ENCODE measurements at regions of chr22 and their contacts with region 1.

Region 1: DNA sequence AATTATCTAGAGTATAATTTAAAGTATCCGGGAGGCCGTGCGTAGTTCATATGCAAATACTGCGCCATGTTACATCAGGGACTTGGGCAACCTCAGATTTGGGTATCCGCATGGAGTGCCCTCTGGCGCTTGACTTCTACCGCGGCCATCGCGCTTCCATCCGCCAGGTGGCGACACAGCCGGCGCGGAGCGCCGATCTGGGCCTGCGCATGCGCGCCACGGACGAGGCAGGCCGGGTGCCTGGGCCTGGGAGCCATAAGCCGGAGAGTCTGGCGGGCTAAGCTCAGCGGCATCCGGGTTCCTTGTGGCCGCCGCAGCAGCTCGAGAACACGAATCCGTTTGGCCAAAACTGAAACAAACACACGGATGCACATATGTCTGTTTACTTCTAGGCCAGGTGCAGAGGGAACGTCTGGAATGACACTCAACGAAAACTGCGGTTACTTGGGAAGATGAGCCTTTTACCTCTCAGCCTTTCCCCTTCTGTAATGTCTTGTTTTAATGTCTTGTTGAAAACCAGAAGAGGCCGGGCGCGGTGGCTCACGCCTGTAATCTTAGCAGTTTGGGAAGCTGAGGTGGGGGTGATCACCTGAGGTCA is 21.9 kb downstream of the SNU13 start:
- DNase-seq: peak; percentile 59
- H3K4me3 ChIP-seq: peak overlapping the region; percentile 37; the same call in 1 of the 2 replicates
- H3K27ac ChIP-seq: peak overlapping the region; percentile 95
- H3K27me3 ChIP-seq: no peaks in the 10 kb centered on the region
- CTCF ChIP-seq: peak; percentile 98

Region 2: DNA sequence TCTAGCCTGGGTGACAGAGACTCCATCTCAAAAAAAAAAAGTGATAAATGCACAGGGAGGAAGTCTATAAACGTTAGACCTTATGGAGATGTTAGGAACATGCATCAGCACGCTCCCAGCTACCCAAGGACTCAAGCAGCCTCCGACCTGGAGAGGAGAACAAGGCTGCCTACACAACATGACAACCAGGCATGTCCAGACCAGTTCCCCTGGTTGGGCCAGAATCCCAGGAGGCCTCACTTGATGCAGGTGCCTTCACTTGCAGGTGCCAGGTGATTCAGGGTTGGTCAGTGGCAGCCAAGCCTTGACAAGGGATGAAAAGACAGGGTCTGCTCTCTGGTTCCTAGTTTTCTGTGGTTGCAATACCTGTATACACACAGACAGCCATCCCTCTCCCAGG is 386.7 kb before region 1 on chr22:
- CTCF ChIA-PET with region 1: no interaction called
- POLR2A ChIA-PET with region 1: no interaction called
- DNase-seq: no peak
- H3K4me3 ChIP-seq: no peak overlapping the region
- H3K27ac ChIP-seq: peak overlapping the region; percentile 31
- H3K27me3 ChIP-seq: no peaks in the 10 kb centered on the region
- CTCF ChIP-seq: no peak

Region 3: DNA sequence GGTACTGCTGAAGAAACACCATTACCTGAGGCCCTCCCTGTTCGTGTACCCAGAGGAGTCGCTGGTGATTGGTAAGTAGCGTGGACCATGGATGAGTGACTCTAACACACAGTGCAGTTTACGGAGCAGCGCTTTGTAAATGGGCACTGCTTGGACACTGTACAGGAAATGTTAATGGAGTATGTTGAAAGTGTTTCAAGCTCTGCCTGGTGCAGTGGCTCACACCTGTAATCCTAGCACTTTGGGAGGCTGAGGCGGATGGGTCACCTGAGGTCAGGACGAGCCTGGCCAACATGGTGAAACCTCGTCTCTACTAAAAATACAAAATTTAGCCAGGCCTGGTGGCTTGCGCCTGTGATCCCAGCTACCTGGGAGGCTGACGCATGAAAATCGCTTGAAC is 15.9 kb before region 1 on chr22:
- CTCF ChIA-PET with region 1: interaction called, 11 read pairs
- POLR2A ChIA-PET with region 1: interaction called, 3 read pairs
- DNase-seq: no peak
- H3K4me3 ChIP-seq: no peak overlapping the region
- H3K27ac ChIP-seq: no peak overlapping the region
- H3K27me3 ChIP-seq: no peaks in the 10 kb centered on the region
- CTCF ChIP-seq: no peak

Region 4: DNA sequence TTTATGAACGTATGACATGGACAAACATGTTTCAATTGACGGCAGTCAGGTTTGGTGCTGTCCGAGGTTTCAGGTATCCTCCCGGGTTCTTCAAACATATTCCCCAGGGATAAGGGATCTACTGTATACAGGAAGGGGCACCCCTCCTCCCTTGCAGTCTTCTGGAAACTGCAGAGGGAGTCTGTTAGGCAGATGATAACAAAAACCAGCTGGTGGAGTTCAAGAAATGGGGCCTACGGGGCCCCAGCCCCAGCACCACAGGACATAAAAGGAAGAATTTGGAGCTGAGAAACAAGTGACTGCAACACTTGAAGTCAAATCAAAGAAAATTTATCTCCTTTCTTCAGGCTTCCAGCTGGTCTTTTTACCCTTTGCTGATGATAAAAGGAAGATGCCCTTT is 10.2 kb before region 1 on chr22:
- CTCF ChIA-PET with region 1: interaction called, 17 read pairs
- POLR2A ChIA-PET with region 1: interaction called, 3 read pairs
- DNase-seq: peak; percentile 3
- H3K4me3 ChIP-seq: no peak overlapping the region
- H3K27ac ChIP-seq: no peak overlapping the region
- H3K27me3 ChIP-seq: no peaks in the 10 kb centered on the region
- CTCF ChIP-seq: no peak

Region 5: DNA sequence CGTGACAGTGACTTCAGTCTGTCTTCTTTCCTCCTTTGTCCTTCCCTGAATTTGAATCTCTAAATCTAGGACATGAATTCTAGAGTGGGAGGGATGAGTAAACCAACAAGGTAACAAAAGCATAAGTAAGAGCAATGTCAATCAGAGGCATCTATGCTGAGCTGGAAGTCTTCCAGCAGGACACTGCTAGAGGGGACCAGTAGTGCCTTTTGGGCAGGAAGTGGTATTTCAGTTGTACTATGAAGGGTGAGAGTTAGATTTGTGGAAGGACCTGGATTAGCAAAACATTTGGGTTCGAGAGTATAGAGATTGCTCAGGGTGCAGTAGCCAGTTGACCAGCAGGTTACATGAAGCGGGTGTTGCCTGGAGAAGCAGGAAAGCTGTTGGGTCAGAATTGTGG is 72.8 kb after region 1 on chr22:
- CTCF ChIA-PET with region 1: no interaction called
- POLR2A ChIA-PET with region 1: no interaction called
- DNase-seq: no peak
- H3K4me3 ChIP-seq: no peak overlapping the region
- H3K27ac ChIP-seq: no peak overlapping the region
- H3K27me3 ChIP-seq: peaks cover 9% of the 10 kb centered on the region
- CTCF ChIP-seq: no peak

Region 6: GRCh38 chr22:41772645-41773044 is 105.9 kb after region 1 on chr22:
- CTCF ChIA-PET with region 1: no interaction called
- POLR2A ChIA-PET with region 1: no interaction called
- DNase-seq: no peak
- H3K4me3 ChIP-seq: no peak overlapping the region
- H3K27ac ChIP-seq: no peak overlapping the region
- H3K27me3 ChIP-seq: peaks cover 13% of the 10 kb centered on the region
- CTCF ChIP-seq: no peak

Region 7: DNA sequence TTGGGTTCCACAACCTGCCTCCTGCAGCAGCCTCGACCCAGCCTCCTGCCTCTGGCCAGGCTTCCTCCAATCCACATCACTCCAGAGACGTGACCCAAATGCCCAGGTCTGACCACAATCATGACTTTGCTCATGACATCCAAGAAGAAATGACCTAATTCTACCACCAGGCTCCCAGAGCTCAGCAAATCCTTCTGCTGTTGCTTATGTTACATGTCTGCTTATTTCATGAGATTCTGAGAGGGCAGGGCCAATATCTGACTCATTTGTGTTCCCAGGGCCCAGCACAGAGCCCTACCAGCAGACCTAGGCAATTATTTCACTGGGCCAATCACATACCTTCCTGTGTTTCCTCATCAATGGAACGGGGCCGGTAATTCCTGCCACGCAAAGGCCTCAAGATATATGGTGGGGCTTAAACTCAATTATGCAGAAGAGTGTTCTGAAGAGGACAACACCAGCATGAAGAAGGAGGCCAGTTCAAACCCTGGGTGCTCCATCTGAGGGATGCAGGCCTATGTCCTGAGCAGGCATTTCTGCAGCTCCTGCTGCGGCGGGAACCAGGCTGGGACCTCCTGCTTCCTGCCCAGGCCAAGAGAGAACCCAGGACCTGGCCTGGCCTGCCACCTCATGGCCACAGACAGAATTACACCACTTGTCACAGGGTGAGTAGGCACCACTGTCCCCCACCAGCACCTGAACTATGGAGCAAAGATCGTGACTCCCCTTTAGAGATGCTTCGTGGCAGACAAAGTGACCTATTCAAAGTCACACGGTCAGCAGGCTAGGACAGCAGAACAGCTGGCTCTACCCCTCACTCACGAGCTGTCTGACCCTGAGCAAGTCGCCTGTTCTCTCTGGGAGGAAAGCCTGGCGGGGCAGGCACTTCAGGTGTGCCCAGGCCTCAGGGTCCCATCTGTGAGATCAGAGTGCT is 274.3 kb after region 1 on chr22:
- CTCF ChIA-PET with region 1: interaction called, 19 read pairs
- POLR2A ChIA-PET with region 1: no interaction called
- DNase-seq: peak; percentile 64
- H3K4me3 ChIP-seq: no peak overlapping the region
- H3K27ac ChIP-seq: peak overlapping the region; percentile 88
- H3K27me3 ChIP-seq: no peaks in the 10 kb centered on the region
- CTCF ChIP-seq: peak; percentile 89

Measured in AG04450 (cell line).